Mammary epithelial cell (primary cell): ENCODE measurements at regions of chr2 and their contacts with region 1.

Region 1: GRCh38 chr2:14288016-14288415 is 344.5 kb upstream of the LRATD1 start:
- DNase-seq: peak; percentile 98
- H3K4me3 ChIP-seq: no peak overlapping the region
- H3K27ac ChIP-seq: peak overlapping the region; percentile 42
- H3K4me1 ChIP-seq: peaks cover 16% of the 10 kb centered on the region
- H3K27me3 ChIP-seq: no peaks in the 10 kb centered on the region
- CTCF ChIP-seq: peak; percentile 73 to 75

Region 2: GRCh38 chr2:14221466-14221865 is 66.5 kb before region 1 on chr2:
- CTCF ChIA-PET with region 1: no interaction called
- dilution Hi-C with region 1: no loop called
- in situ Hi-C with region 1: no loop called
- intact Hi-C with region 1: no loop called
- DNase-seq: no peak
- H3K4me3 ChIP-seq: no peak overlapping the region
- H3K27ac ChIP-seq: no peak overlapping the region
- H3K4me1 ChIP-seq: peaks cover 13% of the 10 kb centered on the region
- H3K27me3 ChIP-seq: no peaks in the 10 kb centered on the region
- CTCF ChIP-seq: no peak

Region 3: GRCh38 chr2:14420851-14421250 is 132.8 kb after region 1 on chr2:
- CTCF ChIA-PET with region 1: no interaction called
- dilution Hi-C with region 1: no loop called
- in situ Hi-C with region 1: no loop called
- intact Hi-C with region 1: loop called (anchors 2 kb)
- DNase-seq: peak; percentile 64
- H3K4me3 ChIP-seq: no peak overlapping the region
- H3K27ac ChIP-seq: no peak overlapping the region
- H3K4me1 ChIP-seq: peaks cover 12% of the 10 kb centered on the region
- H3K27me3 ChIP-seq: no peaks in the 10 kb centered on the region
- CTCF ChIP-seq: no peak

Region 4: DNA sequence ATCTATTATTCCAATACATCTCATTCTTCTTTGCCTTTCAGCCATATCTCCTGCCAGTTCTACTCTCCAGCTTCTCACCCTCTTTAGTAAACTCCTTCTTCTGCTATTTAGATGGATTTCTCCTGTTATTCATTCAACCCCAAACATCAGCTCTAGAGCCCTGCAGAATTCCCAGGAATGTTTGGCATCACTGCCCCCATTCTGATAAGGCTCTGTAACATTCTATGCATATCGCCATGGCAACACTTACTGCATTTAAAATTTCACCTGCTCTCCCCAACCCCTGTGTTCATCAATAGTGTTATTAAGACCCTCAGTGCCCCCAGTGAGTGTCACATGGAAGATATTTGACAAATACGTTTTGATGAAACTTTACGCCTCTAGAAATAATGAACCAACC is 373.1 kb after region 1 on chr2:
- CTCF ChIA-PET with region 1: no interaction called
- dilution Hi-C with region 1: no loop called
- in situ Hi-C with region 1: no loop called
- intact Hi-C with region 1: no loop called
- DNase-seq: no peak
- H3K4me3 ChIP-seq: no peak overlapping the region
- H3K27ac ChIP-seq: no peak overlapping the region
- H3K4me1 ChIP-seq: no peaks in the 10 kb centered on the region
- H3K27me3 ChIP-seq: no peaks in the 10 kb centered on the region
- CTCF ChIP-seq: no peak

Region 5: GRCh38 chr2:14749869-14750268 is 461.9 kb after region 1 on chr2:
- CTCF ChIA-PET with region 1: no interaction called
- dilution Hi-C with region 1: no loop called
- in situ Hi-C with region 1: no loop called
- intact Hi-C with region 1: loop called (anchors 10 kb)
- DNase-seq: peak; percentile 51
- H3K4me3 ChIP-seq: no peak overlapping the region
- H3K27ac ChIP-seq: no peak overlapping the region
- H3K4me1 ChIP-seq: peaks cover 9% of the 10 kb centered on the region
- H3K27me3 ChIP-seq: no peaks in the 10 kb centered on the region
- CTCF ChIP-seq: no peak

Region 6: GRCh38 chr2:14903709-14904374 is 615.8 kb after region 1 on chr2:
- CTCF ChIA-PET with region 1: no interaction called
- dilution Hi-C with region 1: no loop called
- in situ Hi-C with region 1: no loop called
- intact Hi-C with region 1: loop called (anchors 10 kb)
- DNase-seq: peak; percentile 41
- H3K4me3 ChIP-seq: no peak overlapping the region
- H3K27ac ChIP-seq: no peak overlapping the region
- H3K4me1 ChIP-seq: no peaks in the 10 kb centered on the region
- H3K27me3 ChIP-seq: no peaks in the 10 kb centered on the region
- CTCF ChIP-seq: peak; percentile 66 to 67

Region 7: DNA sequence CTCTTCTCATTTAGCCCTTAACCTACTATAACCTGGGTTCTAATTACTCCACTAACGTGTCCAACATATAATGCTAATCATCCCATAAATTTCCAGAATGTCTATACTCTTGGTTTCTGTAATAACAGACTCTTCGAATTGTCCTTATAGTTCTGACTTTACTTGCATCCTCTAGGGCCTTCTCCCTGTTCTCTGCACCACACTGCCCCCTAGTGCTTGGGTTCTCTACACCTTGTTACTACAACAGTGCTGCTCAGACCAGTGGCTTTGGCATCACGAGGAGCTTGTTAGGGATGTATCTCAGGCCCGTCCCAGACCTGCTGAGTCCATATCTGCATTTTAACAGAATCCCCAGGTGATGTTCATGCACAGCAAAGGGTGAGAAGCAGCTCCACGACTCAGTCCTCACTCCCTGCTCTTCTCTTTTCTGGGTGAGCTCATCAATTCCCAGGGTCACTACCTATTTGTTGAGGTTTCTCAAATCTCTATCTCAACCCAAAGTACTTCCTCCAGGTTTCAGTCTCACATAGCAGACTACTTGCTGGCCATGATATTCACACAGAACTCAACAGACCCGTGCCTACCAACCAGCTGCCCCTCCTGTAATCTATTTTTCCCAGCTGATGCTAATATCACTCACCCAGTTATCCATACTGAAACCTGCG is 1289.2 kb after region 1 on chr2:
- CTCF ChIA-PET with region 1: no interaction called
- dilution Hi-C with region 1: no loop called
- in situ Hi-C with region 1: no loop called
- intact Hi-C with region 1: loop called (anchors 5 kb)
- DNase-seq: peak; percentile 66
- H3K4me3 ChIP-seq: no peak overlapping the region
- H3K27ac ChIP-seq: no peak overlapping the region
- H3K4me1 ChIP-seq: peaks cover 5% of the 10 kb centered on the region
- H3K27me3 ChIP-seq: no peaks in the 10 kb centered on the region
- CTCF ChIP-seq: peak; percentile 91 to 94